ENCODE measurements at regions of chr4 and their contacts with region 1.

Region 1: DNA sequence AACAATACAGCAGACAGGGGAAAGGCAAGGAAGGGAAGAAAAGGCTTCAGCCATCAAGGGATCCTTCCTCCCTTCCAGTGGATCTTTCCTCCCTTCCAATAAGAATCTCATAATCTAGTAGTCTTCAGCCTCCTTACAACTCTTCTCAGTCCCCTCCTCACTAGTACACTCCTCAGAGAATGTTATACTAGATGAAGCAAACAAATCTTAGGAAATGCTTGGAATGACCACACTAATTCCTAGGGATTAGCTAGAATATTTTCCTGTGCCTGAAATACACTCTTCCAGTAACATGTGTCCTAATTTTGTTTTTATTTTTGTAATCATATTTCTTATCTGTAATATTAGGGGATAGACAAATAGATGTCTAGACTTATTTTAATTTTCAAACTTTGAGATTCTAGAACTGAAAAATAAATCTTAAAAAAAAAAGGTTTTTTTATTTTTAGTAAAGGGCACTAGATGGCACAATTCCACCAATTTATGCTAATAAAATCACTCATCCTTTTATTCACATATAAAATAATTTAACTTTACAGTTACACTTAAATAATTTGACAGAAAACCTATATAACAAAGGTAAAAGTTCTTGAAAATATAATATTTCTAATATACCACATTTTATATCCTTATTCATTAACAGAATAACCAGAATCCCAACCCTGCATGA is 7.0 kb upstream of the STPG2 start:
- DNase-seq: no peak

Region 2: GRCh38 chr4:97548943-97549583 is 601.2 kb before region 1 on chr4:
- intact Hi-C with region 1: no loop called
- DNase-seq: no peak

Region 3: DNA sequence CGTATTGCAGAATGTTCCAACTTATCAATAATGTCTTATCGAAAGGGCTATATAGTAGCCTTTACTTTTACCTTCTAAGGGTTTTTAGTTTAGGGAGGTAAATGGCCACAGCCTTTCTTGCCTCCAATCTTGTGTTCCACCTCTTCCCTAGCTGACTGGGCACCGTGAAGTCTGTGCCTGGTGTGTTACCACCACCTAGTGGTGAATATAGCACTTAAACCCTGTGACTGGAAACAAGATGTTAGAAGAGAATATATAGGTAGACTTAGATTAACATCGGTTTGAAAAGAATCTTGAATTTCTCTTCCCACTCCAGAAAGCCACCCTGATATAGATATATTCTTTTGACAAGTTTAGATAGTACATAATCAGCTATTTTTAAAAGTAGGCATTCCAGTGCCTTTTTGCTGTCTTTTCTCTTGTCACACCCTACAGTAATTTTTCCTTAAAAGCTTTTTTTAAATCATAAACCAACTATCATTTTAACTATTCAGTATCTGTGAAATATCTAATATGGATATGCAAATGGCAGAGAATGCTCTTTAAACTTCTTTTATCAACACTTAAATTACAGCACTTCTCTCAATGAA is 1312.7 kb after region 1 on chr4:
- intact Hi-C with region 1: loop called (anchors 10 kb)
- DNase-seq: peak; percentile 19 to 92 (median 56)

Measured in posterior cingulate gyrus (tissue), 11 donors.